Naive thymus-derived CD4-positive, alpha-beta T cell (primary cell): ENCODE measurements at regions of chr9 and their contacts with region 1.

Region 1: GRCh38 chr9:5529683-5530221 is 19.4 kb downstream of the PDCD1LG2 start:
- DNase-seq: no peak
- ATAC-seq: no peak
- H3K4me3 ChIP-seq: no peak overlapping the region
- H3K4me3 Mint-ChIP-seq: no peak overlapping the region
- H3K27ac ChIP-seq: no peak overlapping the region
- H3K27ac Mint-ChIP-seq: peak overlapping the region in 6 of 9 donors; percentile 5 to 72 (median 28)
- H3K4me1 ChIP-seq: peaks cover 19 to 32% of the 10 kb centered on the region in 2 donors
- H3K4me1 Mint-ChIP-seq: peaks cover 20 to 50% (median 42%) of the 10 kb centered on the region in 7 donors
- H3K27me3 ChIP-seq: no peaks in the 10 kb centered on the region
- H3K27me3 Mint-ChIP-seq: no peaks in the 10 kb centered on the region

Region 2: GRCh38 chr9:4679268-4680172 is 850.2 kb before region 1 on chr9 and contains the start of gene CDC37L1:
- CTCF ChIA-PET with region 1: no interaction called
- POLR2A ChIA-PET with region 1: no interaction called
- intact Hi-C with region 1: no loop called
- DNase-seq: peak; percentile 98 to 100 (median 99)
- ATAC-seq: peak; percentile 98
- H3K4me3 ChIP-seq: peak within 1 kb of the TSS; percentile 72
- H3K4me3 Mint-ChIP-seq: no peak within 1 kb of the TSS
- H3K27ac ChIP-seq: peak within 1 kb of the TSS; percentile 95
- H3K27ac Mint-ChIP-seq: no peak within 1 kb of the TSS
- H3K4me1 ChIP-seq: peaks cover 15 to 19% of the 10 kb centered on the region in 2 donors
- H3K4me1 Mint-ChIP-seq: peaks cover 9 to 19% (median 17%) of the 10 kb centered on the region in 7 donors
- H3K27me3 ChIP-seq: no peaks in the 10 kb centered on the region
- H3K27me3 Mint-ChIP-seq: no peaks in the 10 kb centered on the region
- total RNA-seq, gene CDC37L1: 13.4 to 28.0 (median 22.9) TPM

Region 3: GRCh38 chr9:5493679-5494511 is 35.9 kb before region 1 on chr9:
- CTCF ChIA-PET with region 1: no interaction called
- POLR2A ChIA-PET with region 1: no interaction called
- intact Hi-C with region 1: loop called in 1 of 2 experiments (anchors 5 kb)
- DNase-seq: no peak
- ATAC-seq: peak; percentile 80
- H3K4me3 ChIP-seq: no peak overlapping the region
- H3K4me3 Mint-ChIP-seq: peak overlapping the region in 1 of 10 donors; percentile 35
- H3K27ac ChIP-seq: no peak overlapping the region
- H3K27ac Mint-ChIP-seq: peak overlapping the region in 4 of 9 donors; percentile 5 to 77 (median 45)
- H3K4me1 ChIP-seq: no peaks in the 10 kb centered on the region
- H3K4me1 Mint-ChIP-seq: peaks cover 0 to 17% (median 4%) of the 10 kb centered on the region in 7 donors
- H3K27me3 ChIP-seq: no peaks in the 10 kb centered on the region
- H3K27me3 Mint-ChIP-seq: no peaks in the 10 kb centered on the region

Region 4: GRCh38 chr9:5549658-5550310 is 20.0 kb after region 1 on chr9:
- CTCF ChIA-PET with region 1: interaction called, 4 read pairs
- POLR2A ChIA-PET with region 1: interaction called, 6 read pairs
- intact Hi-C with region 1: loop called in 1 of 2 experiments (anchors 2 kb)
- DNase-seq: no peak
- ATAC-seq: no peak
- H3K4me3 ChIP-seq: no peak overlapping the region
- H3K4me3 Mint-ChIP-seq: no peak overlapping the region
- H3K27ac ChIP-seq: no peak overlapping the region
- H3K27ac Mint-ChIP-seq: no peak overlapping the region
- H3K4me1 ChIP-seq: no peaks in the 10 kb centered on the region
- H3K4me1 Mint-ChIP-seq: peaks cover 0 to 6% (median 0%) of the 10 kb centered on the region in 7 donors
- H3K27me3 ChIP-seq: no peaks in the 10 kb centered on the region
- H3K27me3 Mint-ChIP-seq: peaks cover 0 to 4% (median 0%) of the 10 kb centered on the region in 5 donors